ENCODE measurements at regions of chr7 and their contacts with region 1.

Region 1: DNA sequence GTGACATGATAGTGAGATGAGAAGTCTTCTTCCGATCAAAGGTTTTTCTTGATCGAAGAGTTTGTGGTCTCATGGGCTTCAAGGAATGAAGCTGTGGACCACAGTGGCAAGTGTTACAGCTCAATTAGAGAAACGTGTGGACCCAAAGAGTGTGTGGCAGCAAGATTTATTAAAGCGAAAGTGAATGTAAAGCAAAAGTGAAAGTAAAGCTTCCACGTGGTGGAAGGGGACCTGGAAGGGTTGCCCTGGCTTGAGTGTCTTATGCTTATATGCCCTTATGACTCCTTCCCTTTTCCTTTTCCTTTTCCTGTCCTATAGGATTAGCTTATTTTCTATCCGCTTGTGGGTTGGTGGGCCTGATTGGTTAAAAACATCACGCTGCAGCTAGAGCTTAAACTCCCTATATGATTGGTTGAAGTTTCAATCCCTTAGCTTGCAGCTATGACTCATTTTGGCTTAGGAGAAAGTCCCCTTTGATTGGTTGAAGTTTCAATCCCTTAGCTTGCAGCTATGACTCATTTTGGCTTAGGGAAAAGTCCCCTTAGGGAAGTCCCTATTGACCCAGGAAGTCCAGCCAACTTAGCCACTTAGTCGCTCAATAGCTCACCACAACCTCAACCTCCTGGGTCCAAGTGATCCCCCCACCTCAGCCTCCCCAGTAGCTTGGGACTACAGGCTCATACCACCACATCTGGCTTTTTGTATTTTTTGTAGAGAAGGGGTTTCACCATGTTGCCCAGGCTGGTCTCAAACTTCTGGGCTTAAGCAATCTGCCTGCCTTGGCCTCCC is 34.7 kb downstream of the MRPS24 start:
- DNase-seq: peak in 7 of 9 experiments; percentile 10 to 85 (median 38)
- ATAC-seq: peak; percentile 63
- H3K4me3 ChIP-seq: peak overlapping the region; percentile 49 to 53
- H3K4me3 Mint-ChIP-seq: peak overlapping the region; percentile 85
- H3K27ac ChIP-seq: peak overlapping the region; percentile 35 to 71
- H3K27ac Mint-ChIP-seq: peak overlapping the region; percentile 83
- H3K4me1 ChIP-seq: peaks cover 12% of the 10 kb centered on the region
- H3K4me1 Mint-ChIP-seq: peaks cover 18% of the 10 kb centered on the region
- H3K27me3 ChIP-seq: no peaks in the 10 kb centered on the region
- H3K27me3 Mint-ChIP-seq: no peaks in the 10 kb centered on the region
- CTCF ChIP-seq: no peak

Region 2: GRCh38 chr7:42940985-42941847 is 893.4 kb before region 1 on chr7:
- CTCF ChIA-PET with region 1: interaction called, 21 read pairs
- POLR2A ChIA-PET with region 1: no interaction called
- intact Hi-C with region 1: loop called in 1 of 2 experiments (anchors 1 kb)
- DNase-seq: peak; percentile 53 to 80 (median 71)
- ATAC-seq: peak; percentile 80
- H3K4me3 ChIP-seq: no peak overlapping the region
- H3K4me3 Mint-ChIP-seq: no peak overlapping the region
- H3K27ac ChIP-seq: no peak overlapping the region
- H3K27ac Mint-ChIP-seq: no peak overlapping the region
- H3K4me1 ChIP-seq: no peaks in the 10 kb centered on the region
- H3K4me1 Mint-ChIP-seq: peaks cover under 1% of the 10 kb centered on the region
- H3K27me3 ChIP-seq: no peaks in the 10 kb centered on the region
- H3K27me3 Mint-ChIP-seq: no peaks in the 10 kb centered on the region
- CTCF ChIP-seq: peak; percentile 90

Region 3: DNA sequence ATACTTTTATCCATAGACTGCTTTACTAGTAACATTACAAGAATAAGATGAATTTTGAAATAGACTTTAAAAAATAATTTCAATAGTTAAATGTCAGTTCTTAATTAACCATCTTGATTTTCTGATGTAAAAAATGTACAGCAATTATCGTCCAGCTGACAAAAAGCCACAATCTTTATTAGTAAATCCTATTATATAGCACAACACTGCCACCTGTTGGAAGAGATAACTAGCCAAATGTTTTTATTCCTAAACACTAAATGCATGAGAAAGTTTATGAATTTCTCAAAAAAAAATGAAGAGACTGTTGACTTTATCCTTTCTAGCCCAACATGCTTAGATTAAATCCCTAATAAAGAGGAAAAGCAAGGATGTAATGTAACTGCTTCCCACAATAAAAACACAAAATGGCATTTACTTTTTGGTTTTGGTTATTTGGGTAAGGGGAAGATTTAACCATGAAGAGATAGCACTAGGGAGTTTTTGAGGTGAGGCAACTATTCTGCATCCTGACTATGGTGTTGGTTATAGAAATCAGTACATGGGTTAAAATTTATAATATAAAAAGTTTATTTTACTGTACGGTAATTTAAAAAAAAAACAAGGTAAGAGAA is 113.4 kb before region 1 on chr7:
- CTCF ChIA-PET with region 1: interaction called, 13 read pairs
- POLR2A ChIA-PET with region 1: no interaction called
- intact Hi-C with region 1: loop called (anchors 1 kb)
- DNase-seq: peak in 3 of 9 experiments; percentile 22 to 76 (median 69)
- ATAC-seq: peak; percentile 31
- H3K4me3 ChIP-seq: no peak overlapping the region
- H3K4me3 Mint-ChIP-seq: no peak overlapping the region
- H3K27ac ChIP-seq: no peak overlapping the region
- H3K27ac Mint-ChIP-seq: no peak overlapping the region
- H3K4me1 ChIP-seq: no peaks in the 10 kb centered on the region
- H3K4me1 Mint-ChIP-seq: peaks cover 54% of the 10 kb centered on the region
- H3K27me3 ChIP-seq: no peaks in the 10 kb centered on the region
- H3K27me3 Mint-ChIP-seq: no peaks in the 10 kb centered on the region
- CTCF ChIP-seq: peak; percentile 95

Region 4: GRCh38 chr7:43850348-43851116 is 15.9 kb after region 1 on chr7:
- CTCF ChIA-PET with region 1: interaction called, 27 read pairs
- POLR2A ChIA-PET with region 1: interaction called, 5 read pairs
- intact Hi-C with region 1: no loop called
- DNase-seq: no peak
- ATAC-seq: no peak
- H3K4me3 ChIP-seq: no peak overlapping the region
- H3K4me3 Mint-ChIP-seq: no peak overlapping the region
- H3K27ac ChIP-seq: no peak overlapping the region
- H3K27ac Mint-ChIP-seq: no peak overlapping the region
- H3K4me1 ChIP-seq: no peaks in the 10 kb centered on the region
- H3K4me1 Mint-ChIP-seq: no peaks in the 10 kb centered on the region
- H3K27me3 ChIP-seq: no peaks in the 10 kb centered on the region
- H3K27me3 Mint-ChIP-seq: peaks cover 4% of the 10 kb centered on the region
- CTCF ChIP-seq: no peak

Region 5: DNA sequence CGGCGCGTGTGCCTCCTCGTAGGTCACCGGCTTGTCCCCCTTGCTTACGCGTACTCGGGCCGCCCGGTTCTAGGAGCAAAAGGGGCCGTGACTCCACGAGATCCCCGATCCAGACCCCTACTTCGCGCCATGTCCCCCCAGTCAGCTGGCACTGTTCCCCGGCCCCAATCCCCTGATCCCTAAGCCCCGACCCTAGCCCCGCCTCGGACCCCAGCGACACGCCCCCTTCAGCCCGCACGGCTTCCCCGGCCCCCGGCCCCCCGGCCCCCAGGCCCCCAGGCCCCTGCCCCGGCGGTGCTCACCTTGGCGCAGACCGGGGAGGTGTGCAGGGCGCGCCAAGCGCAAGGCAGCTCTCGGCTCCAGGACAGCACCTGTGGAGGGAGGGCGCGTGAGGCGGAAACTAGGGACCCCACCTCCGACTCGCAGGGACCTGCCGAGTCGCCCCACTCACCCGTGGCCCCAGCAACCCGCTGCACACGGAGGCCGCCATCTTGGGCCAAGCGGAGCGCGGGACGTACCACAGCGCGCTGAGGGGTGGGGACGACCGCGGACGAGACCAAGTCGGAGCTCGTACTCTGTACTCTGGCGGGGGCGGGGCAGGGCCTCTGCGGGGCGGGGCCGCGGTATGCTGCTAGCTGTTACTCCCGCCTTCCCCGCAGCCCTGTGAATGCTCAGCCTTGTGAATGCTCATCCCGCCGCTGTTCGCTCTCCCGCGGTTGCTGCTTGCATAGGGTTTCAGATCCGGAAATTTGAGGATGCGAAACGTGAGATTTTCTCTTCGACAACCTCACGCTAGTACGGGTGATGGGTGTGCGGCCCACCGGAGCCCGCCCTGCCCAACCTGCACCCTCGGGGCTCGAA is 34.6 kb after region 1 on chr7 and contains the start of gene MRPS24:
- CTCF ChIA-PET with region 1: interaction called, 4 read pairs
- POLR2A ChIA-PET with region 1: no interaction called
- intact Hi-C with region 1: loop called in 1 of 2 experiments (anchors 2 kb)
- DNase-seq: peak; percentile 91 to 97 (median 95)
- ATAC-seq: peak; percentile 100
- H3K4me3 ChIP-seq: peak within 1 kb of the TSS; percentile 69 to 76
- H3K4me3 Mint-ChIP-seq: peak within 1 kb of the TSS; percentile 94
- H3K27ac ChIP-seq: peak within 1 kb of the TSS; percentile 50 to 69
- H3K27ac Mint-ChIP-seq: peak within 1 kb of the TSS; percentile 93
- H3K4me1 ChIP-seq: peaks cover 14% of the 10 kb centered on the region
- H3K4me1 Mint-ChIP-seq: peaks cover 23% of the 10 kb centered on the region
- H3K27me3 ChIP-seq: no peaks in the 10 kb centered on the region
- H3K27me3 Mint-ChIP-seq: no peaks in the 10 kb centered on the region
- CTCF ChIP-seq: no peak
- total RNA-seq, gene MRPS24: 61.7 to 74.4 TPM

Region 6: GRCh38 chr7:43977525-43977924 is 142.9 kb after region 1 on chr7:
- CTCF ChIA-PET with region 1: no interaction called
- POLR2A ChIA-PET with region 1: no interaction called
- intact Hi-C with region 1: no loop called
- DNase-seq: no peak
- ATAC-seq: no peak
- H3K4me3 ChIP-seq: no peak overlapping the region
- H3K4me3 Mint-ChIP-seq: no peak overlapping the region
- H3K27ac ChIP-seq: no peak overlapping the region
- H3K27ac Mint-ChIP-seq: no peak overlapping the region
- H3K4me1 ChIP-seq: no peaks in the 10 kb centered on the region
- H3K4me1 Mint-ChIP-seq: no peaks in the 10 kb centered on the region
- H3K27me3 ChIP-seq: no peaks in the 10 kb centered on the region
- H3K27me3 Mint-ChIP-seq: no peaks in the 10 kb centered on the region
- CTCF ChIP-seq: no peak